ENCODE measurements at regions of chr11 and their contacts with region 1.

Region 1: DNA sequence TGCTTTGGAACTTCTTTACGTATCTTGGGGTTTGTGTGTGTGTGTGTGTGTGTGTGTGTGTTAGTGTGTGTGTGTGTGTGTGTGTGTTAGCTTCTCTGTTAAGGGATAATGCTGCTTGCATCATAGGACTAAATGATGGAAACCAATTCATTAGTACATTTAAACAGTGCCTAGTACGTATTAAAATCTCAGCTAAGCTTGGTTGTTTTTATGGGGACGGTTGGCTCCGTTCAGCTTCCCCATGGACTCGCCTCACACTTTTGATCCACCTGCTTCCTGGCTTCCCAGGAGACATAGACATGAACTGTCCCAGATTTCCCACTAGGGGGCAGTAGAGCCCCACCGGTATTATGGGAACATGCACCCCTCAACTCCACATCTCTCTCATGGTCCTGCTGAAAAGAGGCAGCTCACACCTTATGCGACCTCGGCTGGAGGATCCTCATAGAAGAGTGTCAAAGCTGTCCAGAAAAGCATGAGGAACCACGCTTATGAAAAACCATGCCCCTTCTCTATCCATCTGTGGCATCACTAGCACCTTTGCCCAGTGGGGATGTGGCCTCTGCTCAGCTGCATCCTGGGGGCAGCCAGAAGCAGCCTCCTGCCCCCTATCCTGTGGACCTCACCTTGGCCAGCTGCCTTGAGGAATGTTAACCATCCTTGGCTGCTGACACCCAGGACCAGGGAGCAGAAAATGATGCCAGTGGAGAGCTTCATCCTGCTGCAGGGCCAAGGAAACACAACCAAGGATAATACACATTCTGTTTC is 9.7 kb upstream of the SAAL1 start:
- DNase-seq: no peak
- H3K4me3 ChIP-seq: no peak overlapping the region
- H3K27ac ChIP-seq: no peak overlapping the region
- H3K4me1 ChIP-seq: peaks cover 0 to 5% (median 0%) of the 10 kb centered on the region in 6 donors
- H3K27me3 ChIP-seq: peaks cover 0 to 20% (median 6%) of the 10 kb centered on the region in 7 donors
- CTCF ChIP-seq: peak; percentile 71 to 90 (median 86)
- POLR2A ChIP-seq: no peak

Region 2: DNA sequence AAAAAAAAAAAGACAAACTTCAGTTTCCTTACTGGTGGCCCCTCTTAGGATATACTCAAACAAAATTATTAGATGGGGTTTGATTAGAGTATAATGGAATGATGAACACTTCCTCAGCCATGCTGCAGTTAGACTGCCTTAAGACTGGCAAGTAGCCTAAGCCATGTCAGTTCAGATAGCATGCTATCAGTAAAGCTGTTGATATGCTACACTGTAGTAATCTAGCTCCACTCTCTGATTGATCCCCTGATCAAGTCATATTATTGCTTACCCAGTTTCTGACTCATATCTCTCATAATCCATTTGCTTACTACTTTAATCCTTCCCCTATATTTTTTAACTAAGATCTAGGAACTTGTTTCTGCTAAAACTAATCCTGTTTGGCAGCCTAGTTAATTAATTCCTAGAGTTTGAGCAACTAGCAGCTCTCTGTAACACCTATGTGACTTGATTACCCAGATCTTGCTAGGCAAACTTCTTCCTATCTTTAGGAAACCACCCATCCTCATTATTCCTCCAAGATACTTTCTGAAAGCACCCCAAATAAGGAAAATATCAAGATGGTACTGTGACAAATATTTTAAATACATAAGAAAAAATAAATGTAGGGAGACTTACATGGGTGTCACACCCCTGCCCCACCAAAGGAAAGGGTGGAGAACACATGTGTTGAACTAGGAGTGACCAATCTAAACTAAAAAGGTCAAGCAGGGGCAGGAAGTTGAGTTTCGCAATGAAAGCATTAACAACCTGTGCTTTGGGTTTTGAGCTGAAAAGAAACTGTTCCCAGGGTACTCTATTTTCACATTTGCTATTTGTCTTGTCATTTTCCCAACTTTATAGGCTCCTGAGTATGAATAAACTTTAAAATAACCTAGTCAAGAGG is 950.9 kb before region 1 on chr11:
- intact Hi-C with region 1: no loop called
- DNase-seq: no peak
- H3K4me3 ChIP-seq: no peak overlapping the region
- H3K27ac ChIP-seq: peak overlapping the region in 7 of 8 donors; percentile 18 to 85 (median 75)
- H3K4me1 ChIP-seq: peaks cover 42 to 83% (median 59%) of the 10 kb centered on the region in 6 donors
- H3K27me3 ChIP-seq: no peaks in the 10 kb centered on the region
- CTCF ChIP-seq: no peak
- POLR2A ChIP-seq: no peak

Region 3: DNA sequence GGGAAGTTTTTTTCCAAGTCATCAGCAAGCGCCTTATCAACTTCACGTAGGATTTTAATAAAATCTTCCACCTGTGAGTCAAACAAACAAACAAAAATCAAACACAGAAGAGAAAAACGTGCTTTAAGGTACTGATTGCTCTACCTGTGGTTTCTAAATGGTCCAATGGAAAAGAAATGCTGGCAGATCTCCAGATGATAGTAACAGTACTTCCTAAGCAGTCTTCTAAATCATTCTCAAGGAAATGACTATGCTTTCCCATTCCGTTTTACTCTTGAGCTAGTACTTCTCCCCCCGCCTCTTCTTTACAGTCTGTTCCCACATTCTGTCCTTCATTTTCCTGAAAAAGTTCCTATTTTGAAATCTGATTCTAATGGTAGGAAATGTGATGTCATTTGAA is 35.1 kb before region 1 on chr11:
- intact Hi-C with region 1: no loop called
- DNase-seq: no peak
- H3K4me3 ChIP-seq: no peak overlapping the region
- H3K27ac ChIP-seq: no peak overlapping the region
- H3K4me1 ChIP-seq: no peaks in the 10 kb centered on the region
- H3K27me3 ChIP-seq: no peaks in the 10 kb centered on the region
- CTCF ChIP-seq: no peak
- POLR2A ChIP-seq: no peak

Region 4: GRCh38 chr11:18731949-18732821 is 616.6 kb after region 1 on chr11:
- intact Hi-C with region 1: loop called (anchors 10 kb)
- DNase-seq: no peak
- H3K4me3 ChIP-seq: no peak overlapping the region
- H3K27ac ChIP-seq: peak overlapping the region in 1 of 8 donors; percentile 40
- H3K4me1 ChIP-seq: peaks cover 0 to 19% (median 14%) of the 10 kb centered on the region in 6 donors
- H3K27me3 ChIP-seq: no peaks in the 10 kb centered on the region
- CTCF ChIP-seq: peak; percentile 84 to 97 (median 95)
- POLR2A ChIP-seq: no peak

Measured in spleen (tissue), 13 donors.